Natural killer cell (primary cell): ENCODE measurements at regions of chr16 and their contacts with region 1.

Region 1: DNA sequence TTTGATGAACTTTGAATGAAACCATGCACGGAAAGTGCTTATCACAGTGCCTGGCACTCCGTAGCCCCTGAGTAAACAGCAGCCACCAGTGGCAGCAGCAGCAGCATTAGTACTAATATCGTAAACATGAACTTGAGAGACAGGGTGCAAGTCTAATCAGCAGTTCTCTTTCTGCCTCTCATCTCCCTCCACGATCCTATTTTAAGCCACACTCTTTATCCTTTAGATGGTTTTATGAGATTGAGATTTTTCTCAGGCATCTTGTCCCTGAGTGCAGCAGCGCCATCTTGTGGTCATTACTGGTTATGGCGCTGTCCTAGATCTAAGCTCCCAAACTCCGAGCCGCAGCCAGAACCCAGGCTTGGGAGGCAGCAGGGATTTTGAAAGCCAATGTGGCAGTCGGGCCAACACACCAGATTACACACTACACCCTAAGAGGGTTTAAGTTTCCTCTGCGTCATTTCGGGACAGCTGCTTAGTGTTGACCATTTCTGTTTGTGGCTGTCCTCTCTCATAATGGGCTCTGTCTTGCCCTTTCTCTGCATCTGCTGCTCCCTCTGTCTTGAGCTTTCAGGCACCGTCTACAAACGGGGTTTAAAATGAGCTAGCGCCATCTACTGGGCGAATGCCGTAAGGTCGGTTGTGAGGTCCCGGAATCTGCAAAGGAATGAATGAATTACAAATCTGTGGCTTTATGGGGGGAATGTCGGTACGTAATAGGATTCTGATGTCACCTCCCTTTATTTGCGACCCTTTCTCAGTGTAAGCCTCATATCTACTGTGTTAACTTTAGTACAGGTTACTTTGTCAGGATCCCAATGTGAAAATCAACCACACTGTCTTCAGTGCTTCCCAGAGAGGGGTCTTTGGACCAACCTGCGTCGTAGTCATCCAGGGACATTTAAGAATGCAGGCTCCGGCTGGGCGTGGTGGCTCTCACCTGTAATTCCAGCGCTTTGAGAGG is 64.5 kb downstream of the CYLD start:
- DNase-seq: peak; percentile 80 to 95
- ATAC-seq: peak; percentile 94 to 97 (median 97)
- H3K4me3 ChIP-seq: peak overlapping the region; percentile 11
- H3K4me3 Mint-ChIP-seq: peak overlapping the region; percentile 74
- H3K27ac ChIP-seq: peak overlapping the region; percentile 40
- H3K27ac Mint-ChIP-seq: peak overlapping the region; percentile 78 to 88
- H3K4me1 ChIP-seq: peaks cover 11% of the 10 kb centered on the region
- H3K4me1 Mint-ChIP-seq: peaks cover 12 to 13% of the 10 kb centered on the region in 2 donors
- H3K27me3 ChIP-seq: no peaks in the 10 kb centered on the region
- H3K27me3 Mint-ChIP-seq: no peaks in the 10 kb centered on the region
- CTCF ChIP-seq: peak; percentile 99

Region 2: GRCh38 chr16:49407873-49408550 is 1398.4 kb before region 1 on chr16:
- intact Hi-C with region 1: loop called (anchors 10 kb)
- DNase-seq: peak; percentile 38 to 76
- ATAC-seq: peak in 1 of 3 donors; percentile 83
- H3K4me3 ChIP-seq: no peak overlapping the region
- H3K4me3 Mint-ChIP-seq: no peak overlapping the region
- H3K27ac ChIP-seq: no peak overlapping the region
- H3K27ac Mint-ChIP-seq: no peak overlapping the region
- H3K4me1 ChIP-seq: peaks cover 4% of the 10 kb centered on the region
- H3K4me1 Mint-ChIP-seq: no peaks in the 10 kb centered on the region
- H3K27me3 ChIP-seq: no peaks in the 10 kb centered on the region
- H3K27me3 Mint-ChIP-seq: peaks cover 0 to 9% of the 10 kb centered on the region in 2 donors
- CTCF ChIP-seq: peak; percentile 61

Region 3: GRCh38 chr16:50024684-50025536 is 781.5 kb before region 1 on chr16 and contains the start of gene CNEP1R1:
- intact Hi-C with region 1: loop called (anchors 1 kb)
- DNase-seq: peak; percentile 93 to 96
- ATAC-seq: peak; percentile 94 to 99 (median 97)
- H3K4me3 ChIP-seq: peak within 1 kb of the TSS; percentile 54
- H3K4me3 Mint-ChIP-seq: peak within 1 kb of the TSS; percentile 94
- H3K27ac ChIP-seq: peak within 1 kb of the TSS; percentile 67
- H3K27ac Mint-ChIP-seq: peak within 1 kb of the TSS; percentile 80 to 96
- H3K4me1 ChIP-seq: peaks cover 13% of the 10 kb centered on the region
- H3K4me1 Mint-ChIP-seq: peaks cover 14 to 15% of the 10 kb centered on the region in 2 donors
- H3K27me3 ChIP-seq: no peaks in the 10 kb centered on the region
- H3K27me3 Mint-ChIP-seq: peaks cover 8 to 9% of the 10 kb centered on the region in 2 donors
- CTCF ChIP-seq: peak; percentile 100
- total RNA-seq, gene CNEP1R1: 34.3 to 41.6 (median 37.5) TPM

Region 4: DNA sequence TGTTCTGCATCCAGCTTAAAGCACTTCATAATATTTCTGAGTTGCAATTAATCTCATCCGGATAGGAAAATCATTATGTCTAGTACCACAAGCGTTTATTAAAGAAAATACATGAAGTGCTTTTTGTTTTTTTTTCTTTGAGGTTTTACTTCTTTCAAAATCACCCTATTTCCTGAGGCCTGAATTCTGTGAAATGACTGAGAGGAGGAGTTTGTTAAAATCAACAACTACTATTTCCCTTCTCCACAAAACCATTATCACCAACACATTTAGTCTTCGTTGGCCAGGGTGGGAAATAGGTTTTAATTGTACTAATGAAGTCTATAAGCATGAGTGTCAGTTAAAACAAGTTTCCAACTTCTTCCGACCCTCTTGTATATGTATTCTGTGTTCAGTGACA is 590.7 kb before region 1 on chr16:
- intact Hi-C with region 1: loop called (anchors 1 kb)
- DNase-seq: no peak
- ATAC-seq: peak in 2 of 3 donors; percentile 33 to 63
- H3K4me3 ChIP-seq: peak overlapping the region; percentile 24
- H3K4me3 Mint-ChIP-seq: peak overlapping the region; percentile 82
- H3K27ac ChIP-seq: peak overlapping the region; percentile 57
- H3K27ac Mint-ChIP-seq: peak overlapping the region; percentile 89 to 91
- H3K4me1 ChIP-seq: peaks cover 21% of the 10 kb centered on the region
- H3K4me1 Mint-ChIP-seq: peaks cover 33 to 38% of the 10 kb centered on the region in 2 donors
- H3K27me3 ChIP-seq: no peaks in the 10 kb centered on the region
- H3K27me3 Mint-ChIP-seq: no peaks in the 10 kb centered on the region
- CTCF ChIP-seq: no peak

Region 5: GRCh38 chr16:50548125-50548908 is 258.1 kb before region 1 on chr16 and contains the start of gene NKD1:
- intact Hi-C with region 1: loop called (anchors 10 kb)
- DNase-seq: peak; percentile 67 to 85
- ATAC-seq: peak; percentile 80 to 88 (median 85)
- H3K4me3 ChIP-seq: peak within 1 kb of the TSS; percentile 82
- H3K4me3 Mint-ChIP-seq: peak within 1 kb of the TSS; percentile 95
- H3K27ac ChIP-seq: peak within 1 kb of the TSS; percentile 43
- H3K27ac Mint-ChIP-seq: peak within 1 kb of the TSS; percentile 83 to 88
- H3K4me1 ChIP-seq: peaks cover 13% of the 10 kb centered on the region
- H3K4me1 Mint-ChIP-seq: peaks cover 5 to 16% of the 10 kb centered on the region in 2 donors
- H3K27me3 ChIP-seq: peaks cover 6% of the 10 kb centered on the region
- H3K27me3 Mint-ChIP-seq: peaks cover 13 to 31% of the 10 kb centered on the region in 2 donors
- CTCF ChIP-seq: no peak
- total RNA-seq, gene NKD1: 0.75 to 1.5 (median 1.0) TPM